ENCODE measurements at regions of chr12 and their contacts with region 1.

Region 1: GRCh38 chr12:108193917-108194316 is 64.8 kb downstream of the WSCD2 start:
- DNase-seq: no peak
- ATAC-seq: no peak
- H3K4me3 ChIP-seq: no peak overlapping the region
- H3K27ac ChIP-seq: no peak overlapping the region
- H3K4me1 ChIP-seq: no peaks in the 10 kb centered on the region
- H3K27me3 ChIP-seq: no peaks in the 10 kb centered on the region
- CTCF ChIP-seq: peak; percentile 49

Region 2: GRCh38 chr12:107912421-107913004 is 281.4 kb before region 1 on chr12:
- intact Hi-C with region 1: loop called in 1 of 2 experiments (anchors 10 kb)
- DNase-seq: peak; percentile 23 to 56
- ATAC-seq: no peak
- H3K4me3 ChIP-seq: no peak overlapping the region
- H3K27ac ChIP-seq: no peak overlapping the region
- H3K4me1 ChIP-seq: no peaks in the 10 kb centered on the region
- H3K27me3 ChIP-seq: peaks cover 0 to 13% (median 0%) of the 10 kb centered on the region in 3 donors
- CTCF ChIP-seq: peak; percentile 10

Region 3: DNA sequence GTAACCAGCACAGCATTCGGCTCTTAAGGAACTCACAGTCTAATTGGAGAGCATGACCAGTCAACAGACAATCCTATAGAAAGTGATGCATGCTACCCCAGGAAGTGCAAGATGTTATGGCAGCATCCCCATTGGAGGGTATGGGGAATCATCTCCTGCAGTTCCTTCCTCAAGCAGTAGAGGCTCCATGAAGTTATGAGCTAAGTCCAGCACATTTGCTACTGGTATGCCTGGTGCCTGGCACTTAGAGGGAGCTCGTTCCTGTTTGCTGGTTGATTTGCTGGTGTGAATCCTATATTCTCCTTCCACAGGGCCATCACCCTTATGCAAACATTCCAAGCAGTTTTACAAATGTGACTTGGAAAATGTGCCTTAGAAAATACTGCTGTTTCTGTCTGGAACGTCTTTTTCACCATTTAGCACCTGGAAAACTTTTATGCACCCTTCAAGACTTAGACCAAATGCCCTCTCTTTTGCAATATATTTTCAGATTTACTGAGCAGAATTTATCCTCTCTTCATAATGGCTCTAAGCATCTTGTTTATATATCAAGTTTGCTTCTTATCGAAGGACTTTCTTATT is 201.0 kb before region 1 on chr12:
- intact Hi-C with region 1: loop called in 1 of 2 experiments (anchors 10 kb)
- DNase-seq: no peak
- ATAC-seq: no peak
- H3K4me3 ChIP-seq: no peak overlapping the region
- H3K27ac ChIP-seq: no peak overlapping the region
- H3K4me1 ChIP-seq: no peaks in the 10 kb centered on the region
- H3K27me3 ChIP-seq: peaks cover 0 to 4% (median 0%) of the 10 kb centered on the region in 3 donors
- CTCF ChIP-seq: no peak

Measured in psoas muscle (tissue), 8 donors.